A549 (cell line): ENCODE measurements at regions of chr9 and their contacts with region 1.

Region 1: DNA sequence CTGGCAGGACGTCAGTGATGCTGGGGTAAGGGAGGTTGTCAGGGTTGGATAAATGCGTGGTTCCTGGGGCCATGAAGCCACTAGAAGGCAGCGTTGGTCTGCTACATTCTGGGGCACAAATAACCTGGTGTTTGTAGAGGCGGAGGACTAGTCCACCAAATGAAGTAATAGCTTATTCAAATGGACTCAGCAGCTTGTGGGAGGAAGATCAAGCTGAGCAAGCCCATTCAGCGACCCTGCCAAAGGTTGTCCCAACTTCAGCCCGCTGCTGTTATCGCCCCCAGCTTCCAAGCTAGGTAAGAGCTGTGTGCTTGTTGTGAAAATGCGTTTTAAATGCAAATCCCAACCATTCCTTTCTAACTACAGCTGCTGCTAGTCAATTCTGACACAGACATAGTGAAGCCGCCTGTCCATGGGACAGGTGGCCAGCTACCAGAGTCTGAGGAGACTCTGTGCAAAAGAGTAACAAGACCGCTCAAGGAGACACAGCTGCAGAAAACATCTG is 7.6 kb upstream of the FAM240B start:
- DNase-seq: peak; percentile 21 to 77
- ATAC-seq: peak; percentile 92 to 93
- H3K4me3 ChIP-seq: no peak overlapping the region
- H3K27ac ChIP-seq: peak overlapping the region in 1 of 2 experiments; percentile 52; a peak in 2 of 6 replicates
- H3K4me1 ChIP-seq: no peaks in the 10 kb centered on the region
- CTCF ChIP-seq: peak; percentile 59; the same call in 2 of the 3 replicates
- EP300 ChIP-seq: no peak
- POLR2A ChIP-seq: no peak
- RAD21 ChIP-seq: peak; percentile 89 to 90

Region 2: GRCh38 chr9:38744484-38744883 is 16.9 kb after region 1 on chr9:
- CTCF ChIA-PET with region 1: interaction called, 13 read pairs
- POLR2A ChIA-PET with region 1: no interaction called
- DNase-seq: no peak
- ATAC-seq: no peak
- H3K4me3 ChIP-seq: no peak overlapping the region
- H3K27ac ChIP-seq: no peak overlapping the region
- H3K4me1 ChIP-seq: no peaks in the 10 kb centered on the region
- CTCF ChIP-seq: no peak
- EP300 ChIP-seq: no peak
- POLR2A ChIP-seq: no peak
- RAD21 ChIP-seq: no peak

Region 3: DNA sequence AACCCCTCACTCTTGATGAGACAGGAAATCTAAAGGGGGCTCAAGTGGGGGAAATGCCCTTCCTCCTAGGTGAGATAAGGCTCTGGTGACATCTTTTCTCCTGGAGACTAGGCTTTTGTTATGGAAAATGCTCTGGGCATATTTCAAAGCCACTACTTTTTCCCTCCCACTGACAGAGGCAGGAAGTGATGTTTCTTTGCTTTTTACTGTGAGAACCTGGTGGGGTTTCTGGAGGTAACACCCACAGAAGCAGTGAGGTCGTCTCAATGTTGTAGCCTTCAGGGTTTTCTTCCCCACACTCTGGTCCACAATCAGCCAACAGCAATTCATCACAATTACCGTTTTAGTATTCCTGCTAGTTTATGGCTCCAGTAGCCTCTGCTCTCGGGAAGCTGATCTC is 33.8 kb after region 1 on chr9:
- CTCF ChIA-PET with region 1: no interaction called
- POLR2A ChIA-PET with region 1: no interaction called
- DNase-seq: no peak
- ATAC-seq: no peak
- H3K4me3 ChIP-seq: no peak overlapping the region
- H3K27ac ChIP-seq: no peak overlapping the region
- H3K4me1 ChIP-seq: no peaks in the 10 kb centered on the region
- CTCF ChIP-seq: no peak
- EP300 ChIP-seq: no peak
- POLR2A ChIP-seq: no peak
- RAD21 ChIP-seq: no peak